K562 (cell line): ENCODE measurements at regions of chr21 and their contacts with region 1.

Region 1: GRCh38 chr21:33572350-33572749 is 16.1 kb downstream of the DONSON start:
- DNase-seq: no peak
- ATAC-seq: no peak
- H3K4me3 ChIP-seq: no peak overlapping the region
- H3K27ac ChIP-seq: no peak overlapping the region
- H3K4me1 ChIP-seq: no peaks in the 10 kb centered on the region
- H3K27me3 ChIP-seq: no peaks in the 10 kb centered on the region
- CTCF ChIP-seq: no peak
- EP300 ChIP-seq: no peak
- POLR2A ChIP-seq: no peak
- RAD21 ChIP-seq: no peak

Region 2: GRCh38 chr21:33308586-33309490 is 263.5 kb before region 1 on chr21:
- CTCF ChIA-PET with region 1: no interaction called
- POLR2A ChIA-PET with region 1: no interaction called
- in situ Hi-C with region 1: no loop called
- intact Hi-C with region 1: no loop called
- DNase-seq: peak in 1 of 4 experiments; percentile 51
- ATAC-seq: peak; percentile 52; the same call in 2 of the 3 replicates
- H3K4me3 ChIP-seq: no peak overlapping the region
- H3K27ac ChIP-seq: no peak overlapping the region
- H3K4me1 ChIP-seq: peaks cover 13 to 18% of the 10 kb centered on the region in 2 experiments
- H3K27me3 ChIP-seq: no peaks in the 10 kb centered on the region
- CTCF ChIP-seq: peak in 2 of 3 experiments; percentile 36 to 68; a peak in 2 of 6 replicates
- EP300 ChIP-seq: no peak; the same call in 1 of the 2 replicates
- POLR2A ChIP-seq: no peak
- RAD21 ChIP-seq: peak; percentile 33 to 49; a peak in 3 of 4 replicates

Region 3: DNA sequence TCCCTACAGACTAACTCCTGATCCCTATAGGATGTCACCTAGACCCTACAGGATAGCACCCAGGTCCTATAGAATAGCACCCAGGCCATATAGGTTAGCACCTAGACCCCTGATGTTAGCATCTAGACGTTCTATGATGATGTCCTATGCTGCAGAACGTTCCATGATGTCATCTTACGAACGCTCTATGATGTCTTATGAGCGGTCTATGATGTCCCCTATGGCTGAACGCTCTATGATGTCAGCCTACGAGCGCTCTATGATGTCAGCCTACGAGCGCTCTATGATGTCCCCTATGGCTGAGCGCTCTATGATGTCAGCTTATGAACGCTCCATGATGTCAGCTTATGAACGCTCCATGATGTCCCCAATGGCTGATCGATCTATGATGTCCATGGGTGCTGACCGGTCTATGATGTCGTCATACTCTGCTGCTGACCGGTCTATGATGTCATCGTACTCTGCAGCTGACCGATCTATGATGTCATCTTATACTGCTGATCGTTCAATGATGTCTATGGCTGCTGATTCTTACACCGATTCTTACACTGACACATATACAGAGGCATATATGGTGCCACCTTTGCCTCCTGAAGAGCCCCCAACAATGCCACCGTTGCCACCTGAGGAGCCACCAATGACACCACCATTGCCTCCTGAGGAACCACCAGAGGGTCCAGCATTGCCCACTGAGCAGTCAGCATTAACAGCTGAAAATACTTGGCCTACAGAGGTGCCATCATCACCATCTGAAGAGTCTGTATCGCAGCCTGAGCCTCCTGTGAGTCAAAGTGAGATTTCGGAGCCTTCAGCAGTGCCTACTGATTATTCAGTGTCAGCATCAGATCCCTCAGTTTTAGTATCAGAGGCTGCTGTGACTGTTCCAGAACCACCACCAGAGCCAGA is 20.0 kb before region 1 on chr21:
- CTCF ChIA-PET with region 1: no interaction called
- POLR2A ChIA-PET with region 1: interaction called, 130 read pairs
- in situ Hi-C with region 1: no loop called
- intact Hi-C with region 1: no loop called
- DNase-seq: peak in 1 of 4 experiments; percentile 62
- ATAC-seq: peak; percentile 35
- H3K4me3 ChIP-seq: no peak overlapping the region
- H3K27ac ChIP-seq: no peak overlapping the region; the same call in 2 of the 3 replicates
- H3K4me1 ChIP-seq: peaks cover 0 to 9% of the 10 kb centered on the region in 2 experiments; a peak in 1 of 5 replicates
- H3K27me3 ChIP-seq: no peaks in the 10 kb centered on the region
- CTCF ChIP-seq: no peak
- EP300 ChIP-seq: no peak
- POLR2A ChIP-seq: peak; percentile 72
- RAD21 ChIP-seq: no peak

Region 4: GRCh38 chr21:33588485-33589335 is 16.4 kb after region 1 on chr21 and contains the start of gene DONSON:
- CTCF ChIA-PET with region 1: no interaction called
- POLR2A ChIA-PET with region 1: interaction called, 28 read pairs
- in situ Hi-C with region 1: no loop called
- intact Hi-C with region 1: no loop called
- DNase-seq: peak; percentile 93 to 100 (median 100)
- ATAC-seq: peak; percentile 92
- H3K4me3 ChIP-seq: peak within 1 kb of the TSS; percentile 89
- H3K27ac ChIP-seq: peak within 1 kb of the TSS; percentile 53
- H3K4me1 ChIP-seq: peaks cover 13 to 24% of the 10 kb centered on the region in 2 experiments; a peak in 4 of 5 replicates
- H3K27me3 ChIP-seq: no peaks in the 10 kb centered on the region
- CTCF ChIP-seq: no peak; a peak in 1 of 6 replicates
- EP300 ChIP-seq: no peak
- POLR2A ChIP-seq: peak; percentile 85
- RAD21 ChIP-seq: no peak
- polyA plus RNA-seq, gene DONSON: 26.7 to 30.6 TPM